H1 (cell line): ENCODE measurements at regions of chr15 and their contacts with region 1.

Region 1: DNA sequence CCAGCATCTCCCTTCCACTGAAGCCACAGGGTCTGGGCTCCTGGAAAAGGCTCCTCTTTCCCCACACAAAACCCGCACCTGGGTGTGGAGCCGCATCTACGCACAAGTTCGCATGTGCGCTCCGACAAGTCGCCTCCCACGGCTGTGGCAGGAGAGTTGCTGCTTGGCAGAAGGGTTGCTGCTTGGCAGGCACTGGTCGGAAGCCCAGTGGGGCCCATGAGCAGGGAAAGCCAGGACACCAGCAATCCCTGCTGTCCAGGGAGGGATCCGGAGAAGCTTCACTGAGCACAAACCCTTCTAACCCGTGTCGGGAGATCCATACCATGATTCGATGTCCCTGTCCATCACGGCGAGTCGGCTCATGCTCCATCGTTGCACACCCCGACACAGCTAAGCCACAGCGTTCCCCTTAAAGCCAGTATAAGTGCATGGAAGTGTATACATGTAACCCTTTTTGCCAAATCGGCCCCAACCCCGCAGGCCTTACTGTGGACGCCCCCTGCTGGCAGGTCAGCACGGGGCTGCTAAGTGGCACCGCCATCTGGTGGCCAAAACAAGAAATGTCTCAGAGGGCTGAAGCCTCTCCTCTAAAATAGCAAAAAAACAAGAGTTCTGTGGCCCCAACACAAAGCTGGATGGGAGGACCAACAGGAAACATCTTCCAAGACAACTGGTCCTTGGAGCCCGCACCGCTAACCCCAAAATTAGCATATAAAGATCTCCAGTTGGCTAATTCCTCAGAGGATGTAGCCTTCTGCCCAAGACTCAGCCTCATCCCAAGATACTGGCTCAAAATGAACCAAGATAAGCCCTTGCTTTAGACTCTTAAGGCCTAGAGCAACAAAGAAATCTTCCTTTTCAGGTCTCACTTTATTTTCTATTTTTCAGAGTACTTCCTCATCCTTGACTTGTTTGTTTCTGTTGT is 8.3 kb downstream of the ANKRD63 start:
- DNase-seq: peak; percentile 70 to 97
- H3K4me3 ChIP-seq: no peak overlapping the region
- H3K27ac ChIP-seq: no peak overlapping the region
- H3K4me1 ChIP-seq: peaks cover 0 to 2% (median 1%) of the 10 kb centered on the region in 4 experiments; a peak in 5 of 7 replicates
- H3K27me3 ChIP-seq: peaks cover 0 to 8% (median under 1%) of the 10 kb centered on the region in 4 experiments; a peak in 3 of 7 replicates
- CTCF ChIP-seq: peak; percentile 100
- EP300 ChIP-seq: no peak
- POLR2A ChIP-seq: no peak
- RAD21 ChIP-seq: peak; percentile 92 to 97

Region 2: DNA sequence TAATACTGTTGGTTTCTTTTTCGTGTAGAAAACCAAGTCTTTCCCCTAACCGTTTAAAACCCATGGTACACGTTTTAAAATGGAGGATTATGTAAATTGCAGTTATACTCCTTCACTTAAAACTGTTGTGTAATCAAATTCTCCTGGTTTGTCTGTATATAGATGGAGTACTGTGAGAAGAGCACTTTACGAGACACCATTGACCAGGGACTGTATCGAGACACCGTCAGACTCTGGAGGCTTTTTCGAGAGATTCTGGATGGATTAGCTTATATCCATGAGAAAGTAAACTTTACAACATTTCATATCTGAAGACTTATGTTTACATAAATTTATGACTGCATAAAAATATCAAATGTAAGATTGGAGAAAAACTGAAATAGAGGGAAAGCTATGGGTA is 286.8 kb before region 1 on chr15:
- CTCF ChIA-PET with region 1: no interaction called
- POLR2A ChIA-PET with region 1: no interaction called
- DNase-seq: no peak
- H3K4me3 ChIP-seq: no peak overlapping the region
- H3K27ac ChIP-seq: no peak overlapping the region
- H3K4me1 ChIP-seq: no peaks in the 10 kb centered on the region
- H3K27me3 ChIP-seq: no peaks in the 10 kb centered on the region
- CTCF ChIP-seq: no peak
- EP300 ChIP-seq: no peak
- POLR2A ChIP-seq: no peak
- RAD21 ChIP-seq: no peak

Region 3: DNA sequence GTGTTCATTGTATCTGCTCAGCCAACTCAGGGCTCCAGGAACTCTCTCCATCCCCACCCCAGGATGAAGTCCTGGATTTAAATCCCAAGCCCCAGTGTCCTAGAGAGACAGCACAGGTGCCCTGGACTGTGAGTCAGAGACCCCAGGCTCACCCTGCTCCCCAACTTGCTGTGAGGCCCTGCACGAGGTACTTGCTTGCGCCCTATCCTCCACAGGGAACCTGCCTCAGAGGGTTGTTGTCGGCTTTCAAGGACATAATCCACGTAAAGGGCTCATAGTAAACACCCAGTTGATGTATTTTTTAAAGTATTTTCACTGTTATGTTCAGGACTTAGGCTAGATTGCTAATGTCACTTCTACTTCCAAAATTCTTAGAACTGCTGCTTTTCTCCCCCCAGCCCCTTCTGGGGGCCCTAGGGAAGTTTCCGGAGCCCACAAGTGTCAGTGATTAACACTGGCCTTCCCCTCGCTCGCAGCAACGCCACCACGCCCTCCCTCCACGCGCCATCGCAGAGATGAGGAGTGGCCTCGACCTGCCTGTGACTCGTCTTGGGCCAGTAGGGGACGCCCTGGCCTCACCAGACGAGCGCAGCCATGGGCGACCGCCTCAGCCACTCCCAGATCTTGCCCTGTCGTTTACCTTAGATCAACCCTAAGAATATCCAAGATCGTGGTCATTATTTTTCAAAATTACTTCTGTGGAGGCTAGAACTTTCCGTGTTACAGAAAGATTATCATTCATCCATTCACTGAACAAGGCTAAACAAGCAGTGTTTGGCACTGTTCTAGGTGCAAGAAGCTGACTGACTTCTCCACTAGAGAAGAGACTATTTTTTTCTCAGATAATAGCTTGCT is 229.7 kb before region 1 on chr15:
- CTCF ChIA-PET with region 1: interaction called, 33 read pairs
- POLR2A ChIA-PET with region 1: interaction called, 3 read pairs
- DNase-seq: peak in 1 of 2 experiments; percentile 86
- H3K4me3 ChIP-seq: peak overlapping the region in 1 of 4 experiments; percentile 46; a peak in 2 of 8 replicates
- H3K27ac ChIP-seq: no peak overlapping the region
- H3K4me1 ChIP-seq: peaks cover 0 to 11% (median 6%) of the 10 kb centered on the region in 4 experiments; a peak in 6 of 7 replicates
- H3K27me3 ChIP-seq: no peaks in the 10 kb centered on the region
- CTCF ChIP-seq: peak; percentile 92 to 97 (median 97)
- EP300 ChIP-seq: no peak
- POLR2A ChIP-seq: no peak
- RAD21 ChIP-seq: peak; percentile 98 to 99

Region 4: GRCh38 chr15:40115670-40116093 is 158.9 kb before region 1 on chr15:
- CTCF ChIA-PET with region 1: interaction called, 11 read pairs
- POLR2A ChIA-PET with region 1: no interaction called
- DNase-seq: no peak
- H3K4me3 ChIP-seq: no peak overlapping the region
- H3K27ac ChIP-seq: no peak overlapping the region
- H3K4me1 ChIP-seq: peaks cover 5 to 19% (median 9%) of the 10 kb centered on the region in 4 experiments
- H3K27me3 ChIP-seq: no peaks in the 10 kb centered on the region
- CTCF ChIP-seq: no peak
- EP300 ChIP-seq: no peak
- POLR2A ChIP-seq: no peak
- RAD21 ChIP-seq: no peak

Region 5: DNA sequence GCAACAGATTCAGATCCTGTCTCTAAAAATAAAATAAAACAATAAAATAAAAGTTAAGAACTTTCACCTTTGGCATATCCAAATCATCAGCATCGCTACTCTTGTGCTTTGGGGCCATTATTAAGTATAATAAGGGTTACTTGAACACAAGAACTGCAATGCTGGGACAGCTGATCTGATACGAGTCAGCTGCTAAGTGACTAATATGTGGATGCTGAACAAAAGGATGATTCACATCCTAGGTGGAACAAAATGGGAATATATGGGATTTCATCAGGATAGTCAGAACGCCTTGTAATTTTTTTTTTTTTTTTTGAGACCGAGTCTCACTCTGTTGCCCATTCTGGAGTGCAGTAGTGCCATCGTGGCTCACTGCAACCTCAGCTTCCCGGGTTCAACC is 84.0 kb before region 1 on chr15:
- CTCF ChIA-PET with region 1: interaction called, 10 read pairs
- POLR2A ChIA-PET with region 1: no interaction called
- DNase-seq: no peak
- H3K4me3 ChIP-seq: no peak overlapping the region
- H3K27ac ChIP-seq: no peak overlapping the region
- H3K4me1 ChIP-seq: no peaks in the 10 kb centered on the region
- H3K27me3 ChIP-seq: no peaks in the 10 kb centered on the region
- CTCF ChIP-seq: no peak
- EP300 ChIP-seq: no peak
- POLR2A ChIP-seq: no peak
- RAD21 ChIP-seq: no peak

Region 6: DNA sequence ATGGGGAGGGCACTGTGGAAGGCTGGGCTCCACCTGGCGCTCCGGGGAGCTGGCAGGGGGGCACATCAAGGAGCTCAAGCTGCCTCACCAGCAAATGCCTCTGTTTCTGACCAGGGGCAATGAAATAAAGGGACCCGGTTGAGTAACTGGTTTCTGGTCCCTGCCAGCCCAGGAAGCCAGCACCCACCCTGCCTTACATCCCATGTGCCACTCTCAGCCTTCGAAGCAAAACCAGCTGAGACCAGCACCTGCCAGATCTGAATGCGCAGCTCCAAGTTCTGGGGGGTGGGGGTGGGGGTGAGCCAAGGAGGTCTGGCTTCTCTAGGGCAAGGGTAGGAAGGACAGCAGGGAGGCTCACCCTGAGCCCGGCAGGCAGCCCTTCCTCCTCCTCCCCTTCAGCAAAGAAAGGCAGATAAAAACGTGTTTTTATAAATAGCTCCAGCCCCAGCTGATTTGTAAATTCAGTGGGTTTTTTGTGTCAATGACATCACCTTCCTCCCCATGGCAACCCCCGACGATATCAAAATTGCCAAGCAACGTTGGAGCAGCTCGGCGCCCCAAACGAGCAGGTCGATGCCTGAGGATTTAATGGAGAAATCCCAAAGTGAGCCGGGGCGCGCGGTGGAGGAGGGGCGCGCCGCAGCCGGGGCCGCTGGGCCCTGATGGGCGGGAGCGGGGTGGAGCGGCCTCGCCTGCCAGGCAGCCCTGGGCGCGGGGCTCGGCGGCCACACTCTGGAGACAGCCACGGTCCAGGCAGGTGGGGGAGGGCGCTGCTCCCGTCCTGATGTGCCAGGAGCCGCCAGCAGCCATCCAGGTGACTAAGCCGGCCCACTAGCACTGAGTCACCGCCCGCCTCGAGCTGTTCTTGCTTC is 35.8 kb before region 1 on chr15 and contains the start of gene PAK6:
- CTCF ChIA-PET with region 1: interaction called, 1,340 read pairs
- POLR2A ChIA-PET with region 1: interaction called, 11 read pairs
- DNase-seq: peak; percentile 60 to 90
- H3K4me3 ChIP-seq: peak within 1 kb of the TSS; percentile 14 to 54 (median 30); a peak in 7 of 8 replicates
- H3K27ac ChIP-seq: no peak within 1 kb of the TSS
- H3K4me1 ChIP-seq: peaks cover 9 to 18% (median 14%) of the 10 kb centered on the region in 4 experiments
- H3K27me3 ChIP-seq: peaks cover 0 to 6% (median 2%) of the 10 kb centered on the region in 4 experiments; a peak in 2 of 7 replicates
- CTCF ChIP-seq: peak in 1 of 3 experiments; percentile 4; a peak in 1 of 4 replicates
- EP300 ChIP-seq: no peak
- POLR2A ChIP-seq: peak in 1 of 2 experiments; percentile 64; a peak in 2 of 3 replicates
- RAD21 ChIP-seq: no peak
- total RNA-seq, gene PAK6: 9.0 and 9.4 TPM in 2 replicates

Region 7: DNA sequence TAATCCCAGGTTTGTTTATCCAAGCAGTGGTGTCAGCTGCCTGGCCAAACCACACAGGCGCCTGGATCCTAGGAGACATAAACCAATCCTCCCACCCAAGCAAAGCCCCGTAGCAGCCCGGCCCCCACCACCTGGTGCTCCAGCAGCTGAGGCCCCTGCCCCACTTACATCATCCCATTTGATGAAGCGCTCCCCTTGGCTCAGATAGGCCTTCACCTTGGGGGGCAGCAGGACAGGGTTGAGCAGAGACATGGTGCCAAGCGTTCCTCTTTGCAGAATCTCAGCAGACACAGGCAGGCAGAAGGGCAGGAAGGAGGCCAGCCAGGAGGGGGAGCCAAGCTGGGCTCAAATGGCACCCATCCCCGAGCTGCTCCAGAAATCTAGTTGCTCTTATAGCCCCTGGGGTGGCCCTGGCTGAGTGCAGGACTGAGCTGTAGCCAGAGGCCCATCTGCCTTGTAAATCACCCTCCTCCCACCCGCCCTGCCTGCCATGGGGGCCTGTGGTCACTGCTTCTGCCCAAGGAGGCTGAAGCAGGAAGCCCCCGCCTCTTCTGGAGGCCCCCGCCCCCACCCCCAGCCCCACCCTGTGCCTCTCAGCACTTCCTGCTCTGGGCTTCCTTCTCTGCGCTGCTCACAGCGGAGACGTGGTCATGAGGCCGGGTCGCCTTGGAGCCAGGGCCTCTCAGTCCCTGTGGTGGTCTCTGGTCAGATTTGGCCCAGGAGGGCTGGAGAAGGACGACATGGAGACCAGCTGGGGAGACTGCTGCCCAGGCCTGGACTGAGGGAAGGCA is 33.0 kb after region 1 on chr15 and contains the start of gene PLCB2:
- CTCF ChIA-PET with region 1: interaction called, 531 read pairs
- POLR2A ChIA-PET with region 1: interaction called, 29 read pairs
- DNase-seq: no peak
- H3K4me3 ChIP-seq: 0 out of 8 replicates have a peak within 1 kb of the TSS, but pooled peaks of 1 of the 4 experiments have one; percentile 19
- H3K27ac ChIP-seq: no peak within 1 kb of the TSS
- H3K4me1 ChIP-seq: peaks cover 0 to 29% (median 21%) of the 10 kb centered on the region in 4 experiments; a peak in 6 of 7 replicates
- H3K27me3 ChIP-seq: peaks cover 0 to 6% (median 0%) of the 10 kb centered on the region in 4 experiments; a peak in 3 of 7 replicates
- CTCF ChIP-seq: peak; percentile 30 to 60 (median 52); a peak in 3 of 4 replicates
- EP300 ChIP-seq: no peak
- POLR2A ChIP-seq: no peak
- RAD21 ChIP-seq: peak in 1 of 2 experiments; percentile 24; a peak in 1 of 4 replicates
- total RNA-seq, gene PLCB2: 8.4 and 9.4 TPM in 2 replicates

Region 8: GRCh38 chr15:40421246-40422157 is 146.9 kb after region 1 on chr15:
- CTCF ChIA-PET with region 1: interaction called, 27 read pairs
- POLR2A ChIA-PET with region 1: interaction called, 4 read pairs
- DNase-seq: peak; percentile 62 to 95
- H3K4me3 ChIP-seq: peak overlapping the region in 1 of 4 experiments; percentile 45; a peak in 3 of 8 replicates
- H3K27ac ChIP-seq: no peak overlapping the region
- H3K4me1 ChIP-seq: peaks cover 0 to 6% (median 3%) of the 10 kb centered on the region in 4 experiments; a peak in 4 of 7 replicates
- H3K27me3 ChIP-seq: peaks cover 0 to 2% (median 0%) of the 10 kb centered on the region in 4 experiments; a peak in 1 of 7 replicates
- CTCF ChIP-seq: peak; percentile 95 to 97 (median 96)
- EP300 ChIP-seq: no peak
- POLR2A ChIP-seq: peak in 1 of 2 experiments; percentile 38; a peak in 1 of 3 replicates
- RAD21 ChIP-seq: peak; percentile 91 to 95